ENCODE measurements at regions of chr6 and their contacts with region 1.

Region 1: DNA sequence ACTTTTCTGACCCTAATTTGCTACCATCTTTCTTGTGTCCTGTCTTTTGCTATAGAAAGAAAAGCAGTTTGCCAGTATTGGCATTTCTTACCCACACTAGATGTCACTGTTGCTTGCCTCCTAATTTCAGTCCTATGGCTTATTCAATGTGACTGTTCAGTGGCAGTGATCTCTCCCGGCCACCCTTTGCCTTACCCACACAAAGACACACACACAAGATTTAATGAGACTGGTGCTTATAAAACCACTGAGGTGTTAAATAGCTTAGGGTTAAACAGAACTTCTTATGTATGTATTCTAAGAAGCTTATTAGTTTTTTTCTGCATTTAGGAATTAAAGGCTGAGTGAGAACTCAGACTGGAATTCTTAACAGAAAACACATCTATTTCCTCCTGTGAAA is 233.6 kb upstream of the ASCC3 start:
- DNase-seq: peak in 3 of 10 donors; percentile 18 to 63 (median 28)
- H3K4me3 ChIP-seq: no peak overlapping the region
- H3K27ac ChIP-seq: no peak overlapping the region
- H3K27me3 ChIP-seq: peaks cover 0 to 7% (median 0%) of the 10 kb centered on the region in 45 donors
- CTCF ChIP-seq: peak; percentile 29 to 74 (median 55)

Region 2: DNA sequence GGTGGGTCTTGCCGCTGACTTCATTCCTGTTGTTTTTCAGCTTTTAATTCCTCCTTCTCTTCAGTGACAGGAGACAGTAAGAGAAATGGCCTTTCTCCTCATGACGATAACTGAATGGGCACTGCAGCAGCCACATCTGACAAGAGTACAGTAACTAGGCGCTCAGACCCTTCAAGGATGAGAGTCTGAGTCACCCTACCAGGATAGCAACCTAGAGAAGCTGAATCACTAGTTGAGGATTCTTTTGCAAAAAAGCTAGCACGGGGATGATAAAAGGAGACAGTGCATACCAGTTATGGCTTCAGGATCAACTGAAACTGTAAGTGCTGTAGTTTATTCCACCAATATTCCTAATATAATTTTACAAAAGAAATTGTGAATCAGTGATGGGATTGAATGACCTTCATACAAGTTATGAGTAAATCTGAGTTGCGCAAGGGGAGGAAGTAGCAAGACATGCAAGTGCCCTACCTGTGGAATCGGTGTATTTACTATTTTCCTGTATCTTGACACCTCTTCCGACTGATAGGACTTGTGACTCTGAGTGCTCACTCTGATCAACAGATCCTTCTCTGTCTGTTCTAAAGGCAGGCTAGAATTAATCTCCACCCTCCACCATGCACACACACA is 117.0 kb after region 1 on chr6:
- intact Hi-C with region 1: no loop called
- DNase-seq: no peak
- H3K4me3 ChIP-seq: no peak overlapping the region
- H3K27ac ChIP-seq: no peak overlapping the region
- H3K27me3 ChIP-seq: no peaks in the 10 kb centered on the region
- CTCF ChIP-seq: no peak

Region 3: GRCh38 chr6:102619585-102619984 is 1504.9 kb after region 1 on chr6:
- intact Hi-C with region 1: loop called in 1 of 2 experiments (anchors 10 kb)
- DNase-seq: no peak
- H3K4me3 ChIP-seq: no peak overlapping the region
- H3K27ac ChIP-seq: no peak overlapping the region
- H3K27me3 ChIP-seq: no peaks in the 10 kb centered on the region
- CTCF ChIP-seq: peak in 49 of 56 donors; percentile 11 to 63 (median 41)